ENCODE measurements at regions of chr12 and their contacts with region 1.

Region 1: DNA sequence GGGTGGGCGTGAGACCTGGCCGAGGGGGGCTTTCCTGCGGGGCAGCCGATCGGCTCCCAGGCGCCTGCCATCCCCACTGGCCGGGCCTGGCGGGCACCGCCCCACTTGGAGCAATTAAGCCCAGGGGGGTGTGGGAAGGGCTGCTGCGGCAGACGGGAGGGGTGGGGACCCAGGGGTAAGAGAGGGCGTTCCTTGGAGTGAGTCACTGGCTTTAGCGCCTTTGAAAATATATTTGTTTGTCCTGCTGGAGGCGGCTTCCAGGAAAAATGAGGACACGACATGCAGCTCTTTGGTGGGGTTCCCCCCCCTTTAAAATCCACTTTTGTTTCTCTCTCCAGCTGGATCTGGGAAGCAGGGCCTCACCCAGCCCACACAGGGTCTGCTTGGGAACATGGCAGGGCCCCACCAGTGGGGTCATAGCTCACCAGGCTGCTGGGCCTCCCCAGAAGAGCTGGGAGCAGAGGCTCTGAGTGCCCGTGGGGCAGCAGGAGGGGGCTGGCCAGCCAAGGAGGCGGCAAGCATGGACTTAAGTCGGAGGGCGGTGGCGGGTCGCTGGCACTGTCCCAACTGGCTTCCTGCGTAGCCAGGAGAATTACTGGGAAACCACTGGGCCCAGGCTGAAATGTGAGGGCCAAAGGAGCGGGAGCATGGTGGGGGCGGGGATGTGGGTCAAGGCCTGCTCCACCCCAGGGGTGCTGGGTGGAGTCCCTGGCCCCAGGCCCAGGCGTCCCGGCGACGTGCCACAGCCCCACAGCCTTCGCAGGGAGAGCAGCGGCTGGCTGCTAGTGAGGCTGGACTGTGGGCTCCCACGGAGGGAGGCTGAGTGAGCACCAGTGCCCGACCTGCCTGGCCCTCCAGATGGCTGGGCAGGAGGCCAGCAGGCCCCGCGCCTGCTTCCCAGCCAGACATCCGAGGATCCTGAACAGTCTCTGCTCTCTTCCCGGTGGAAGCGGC is 128.0 kb downstream of the RFLNA start:
- DNase-seq: peak; percentile 90
- H3K4me3 ChIP-seq: no peak overlapping the region
- H3K27ac ChIP-seq: peak overlapping the region; percentile 98
- H3K4me1 ChIP-seq: peaks cover 28% of the 10 kb centered on the region
- H3K27me3 ChIP-seq: no peaks in the 10 kb centered on the region
- CTCF ChIP-seq: no peak
- POLR2A ChIP-seq: peak; percentile 40

Region 2: GRCh38 chr12:124369901-124370378 is 52.9 kb before region 1 on chr12:
- CTCF ChIA-PET with region 1: no interaction called
- POLR2A ChIA-PET with region 1: no interaction called
- dilution Hi-C with region 1: no loop called
- intact Hi-C with region 1: no loop called
- DNase-seq: no peak
- H3K4me3 ChIP-seq: no peak overlapping the region
- H3K27ac ChIP-seq: peak overlapping the region; percentile 61
- H3K4me1 ChIP-seq: peaks cover 29% of the 10 kb centered on the region
- H3K27me3 ChIP-seq: no peaks in the 10 kb centered on the region
- CTCF ChIP-seq: no peak
- POLR2A ChIP-seq: no peak

Region 3: GRCh38 chr12:124441443-124442194 is 18.8 kb after region 1 on chr12:
- CTCF ChIA-PET with region 1: no interaction called
- POLR2A ChIA-PET with region 1: no interaction called
- dilution Hi-C with region 1: no loop called
- intact Hi-C with region 1: loop called (anchors 1 kb)
- DNase-seq: peak; percentile 83
- H3K4me3 ChIP-seq: peak overlapping the region in 1 of 3 experiments; percentile 5
- H3K27ac ChIP-seq: peak overlapping the region; percentile 89
- H3K4me1 ChIP-seq: peaks cover 27% of the 10 kb centered on the region
- H3K27me3 ChIP-seq: no peaks in the 10 kb centered on the region
- CTCF ChIP-seq: no peak
- POLR2A ChIP-seq: peak; percentile 56

Region 4: DNA sequence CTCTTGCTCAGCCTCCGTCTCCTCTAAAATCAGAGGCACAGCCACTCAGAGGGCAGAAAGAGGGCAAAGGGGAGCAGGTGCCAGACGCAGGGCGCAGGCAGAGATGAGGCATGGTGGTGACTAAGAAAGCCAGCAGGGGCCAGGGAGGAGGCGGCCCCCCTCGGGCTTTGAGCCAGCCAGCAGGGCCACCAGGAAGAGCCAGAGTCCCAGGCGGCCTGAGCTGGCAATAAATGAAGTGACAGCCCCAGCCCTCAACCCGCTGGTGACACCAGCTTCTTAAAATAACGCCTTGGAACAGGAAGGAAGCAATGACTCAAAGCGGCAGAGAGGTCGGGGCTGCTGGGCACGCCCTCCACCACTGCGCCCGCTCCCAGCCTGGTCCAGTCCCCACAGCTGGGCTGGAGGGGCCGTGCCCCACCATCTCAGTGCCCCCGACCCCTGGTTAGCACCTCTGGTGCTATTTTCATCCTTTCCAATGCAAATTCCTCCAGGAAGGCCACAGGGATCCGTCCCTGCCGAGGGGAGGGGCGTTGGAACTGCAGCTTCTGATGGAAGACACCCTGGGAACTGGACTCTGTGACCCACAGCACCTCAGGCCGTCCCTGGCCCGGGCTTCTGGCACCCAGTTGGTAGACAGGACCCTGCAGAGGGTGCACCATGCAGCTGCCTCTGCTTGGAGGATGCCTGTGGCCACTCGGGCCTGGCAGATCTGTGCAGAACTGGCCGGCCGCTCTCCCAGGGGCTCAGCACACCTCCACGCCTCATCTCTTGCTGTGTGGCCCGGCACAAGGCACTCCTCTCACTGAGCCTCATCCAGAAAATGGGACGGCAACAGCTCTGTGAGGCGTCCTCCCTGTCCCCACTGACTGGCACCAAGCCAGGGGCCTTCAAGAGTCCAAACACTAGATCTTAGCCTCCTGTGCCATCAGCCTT is 30.8 kb after region 1 on chr12:
- CTCF ChIA-PET with region 1: no interaction called
- POLR2A ChIA-PET with region 1: no interaction called
- dilution Hi-C with region 1: no loop called
- intact Hi-C with region 1: loop called (anchors 1 kb)
- DNase-seq: peak; percentile 80
- H3K4me3 ChIP-seq: no peak overlapping the region
- H3K27ac ChIP-seq: peak overlapping the region; percentile 81
- H3K4me1 ChIP-seq: peaks cover 29% of the 10 kb centered on the region
- H3K27me3 ChIP-seq: no peaks in the 10 kb centered on the region
- CTCF ChIP-seq: no peak
- POLR2A ChIP-seq: no peak

Region 5: DNA sequence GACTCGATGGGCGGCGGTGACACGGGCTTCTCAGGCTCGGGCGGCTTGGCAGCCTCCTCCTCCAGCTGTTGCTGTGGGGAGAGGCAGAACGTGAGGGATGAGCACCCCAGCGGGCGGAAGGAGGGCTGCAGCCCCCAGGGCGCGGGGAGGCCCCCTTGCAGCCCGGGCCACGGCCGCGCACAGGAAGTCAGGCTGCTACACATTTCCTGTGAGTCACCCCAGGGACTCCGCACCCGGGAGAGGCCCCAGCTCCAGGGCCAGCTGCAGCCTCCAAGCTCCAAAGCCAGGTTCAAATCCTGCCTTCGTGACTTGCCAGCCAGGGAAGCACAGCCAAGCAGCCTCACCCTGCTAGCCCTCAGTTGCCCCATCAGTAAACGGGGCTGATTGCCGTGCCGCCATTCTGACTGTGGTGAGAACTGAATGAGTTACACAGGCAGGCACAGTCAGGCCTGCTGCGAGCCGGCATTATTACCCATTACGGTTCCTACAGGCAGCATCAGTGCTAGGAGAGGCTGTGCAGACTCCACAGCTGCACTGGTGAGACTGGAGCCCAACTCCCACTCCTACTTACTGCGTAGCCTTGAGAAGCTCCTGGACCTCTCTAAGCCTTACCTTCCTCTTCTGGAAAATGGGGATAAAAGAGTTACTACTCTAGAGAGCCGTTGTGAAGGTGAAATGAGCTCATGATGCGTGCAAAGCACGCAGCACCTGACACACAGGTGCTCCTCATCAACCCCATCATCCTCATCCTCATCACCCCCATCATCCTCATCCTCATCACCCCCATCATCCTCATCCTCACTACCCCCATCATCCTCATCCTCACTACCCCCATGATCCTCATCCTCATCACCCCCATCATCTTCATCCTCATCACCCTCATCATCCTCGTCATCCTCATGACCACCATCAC is 43.6 kb after region 1 on chr12:
- CTCF ChIA-PET with region 1: interaction called, 3 read pairs
- POLR2A ChIA-PET with region 1: no interaction called
- dilution Hi-C with region 1: no loop called
- intact Hi-C with region 1: loop called (anchors 2 kb)
- DNase-seq: peak; percentile 64
- H3K4me3 ChIP-seq: no peak overlapping the region
- H3K27ac ChIP-seq: peak overlapping the region; percentile 71
- H3K4me1 ChIP-seq: peaks cover 12% of the 10 kb centered on the region
- H3K27me3 ChIP-seq: no peaks in the 10 kb centered on the region
- CTCF ChIP-seq: peak in 1 of 2 donors; percentile 17
- POLR2A ChIP-seq: no peak

Region 6: DNA sequence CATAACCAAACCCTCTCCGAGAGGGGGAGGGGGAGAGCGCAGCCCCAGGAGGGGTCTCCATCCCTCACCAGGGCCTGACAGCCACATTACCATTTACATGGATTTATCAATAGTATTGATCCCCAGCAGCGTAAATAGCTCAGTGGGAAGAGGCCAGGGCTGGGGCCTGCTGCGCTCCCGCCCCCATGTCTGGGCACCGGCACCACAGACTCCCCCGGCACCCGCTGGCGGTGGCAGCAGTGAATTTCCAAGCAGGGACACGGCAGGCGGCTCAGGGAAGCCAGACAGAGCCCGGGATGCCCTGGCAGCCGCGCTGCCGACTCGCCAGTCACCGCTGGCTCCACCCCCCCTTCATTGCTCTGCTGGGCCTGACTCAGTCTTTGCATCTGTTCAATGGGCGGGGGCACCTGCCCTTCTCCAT is 142.2 kb after region 1 on chr12:
- CTCF ChIA-PET with region 1: no interaction called
- POLR2A ChIA-PET with region 1: no interaction called
- dilution Hi-C with region 1: no loop called
- intact Hi-C with region 1: no loop called
- DNase-seq: no peak
- H3K4me3 ChIP-seq: no peak overlapping the region
- H3K27ac ChIP-seq: no peak overlapping the region
- H3K4me1 ChIP-seq: peaks cover 10% of the 10 kb centered on the region
- H3K27me3 ChIP-seq: no peaks in the 10 kb centered on the region
- CTCF ChIP-seq: no peak
- POLR2A ChIP-seq: no peak